Testis (tissue), 5 donors: ENCODE measurements at regions of chr12 and their contacts with region 1.

Region 1: GRCh38 chr12:57904848-57905811 is 36.2 kb upstream of the ATP23 start:
- DNase-seq: peak; percentile 91
- H3K4me3 ChIP-seq: no peak overlapping the region
- H3K27ac ChIP-seq: no peak overlapping the region
- H3K4me1 ChIP-seq: no peaks in the 10 kb centered on the region
- H3K27me3 ChIP-seq: no peaks in the 10 kb centered on the region
- CTCF ChIP-seq: peak; percentile 100
- POLR2A ChIP-seq: no peak

Region 2: GRCh38 chr12:57803319-57803893 is 101.7 kb before region 1 on chr12:
- intact Hi-C with region 1: loop called (anchors 10 kb)
- DNase-seq: peak; percentile 69
- H3K4me3 ChIP-seq: no peak overlapping the region
- H3K27ac ChIP-seq: no peak overlapping the region
- H3K4me1 ChIP-seq: no peaks in the 10 kb centered on the region
- H3K27me3 ChIP-seq: no peaks in the 10 kb centered on the region
- CTCF ChIP-seq: peak; percentile 55 to 76 (median 66)
- POLR2A ChIP-seq: no peak